Heart left ventricle (tissue), 16 donors: ENCODE measurements at regions of chr21 and their contacts with region 1.

Region 1: GRCh38 chr21:45778686-45779085 is 135.2 kb downstream of the PCBP3 start:
- DNase-seq: peak in 1 of 5 donors; percentile 59
- ATAC-seq: no peak
- H3K4me3 ChIP-seq: no peak overlapping the region
- H3K27ac ChIP-seq: no peak overlapping the region
- H3K4me1 ChIP-seq: no peaks in the 10 kb centered on the region
- H3K27me3 ChIP-seq: no peaks in the 10 kb centered on the region
- CTCF ChIP-seq: no peak
- POLR2A ChIP-seq: no peak

Region 2: DNA sequence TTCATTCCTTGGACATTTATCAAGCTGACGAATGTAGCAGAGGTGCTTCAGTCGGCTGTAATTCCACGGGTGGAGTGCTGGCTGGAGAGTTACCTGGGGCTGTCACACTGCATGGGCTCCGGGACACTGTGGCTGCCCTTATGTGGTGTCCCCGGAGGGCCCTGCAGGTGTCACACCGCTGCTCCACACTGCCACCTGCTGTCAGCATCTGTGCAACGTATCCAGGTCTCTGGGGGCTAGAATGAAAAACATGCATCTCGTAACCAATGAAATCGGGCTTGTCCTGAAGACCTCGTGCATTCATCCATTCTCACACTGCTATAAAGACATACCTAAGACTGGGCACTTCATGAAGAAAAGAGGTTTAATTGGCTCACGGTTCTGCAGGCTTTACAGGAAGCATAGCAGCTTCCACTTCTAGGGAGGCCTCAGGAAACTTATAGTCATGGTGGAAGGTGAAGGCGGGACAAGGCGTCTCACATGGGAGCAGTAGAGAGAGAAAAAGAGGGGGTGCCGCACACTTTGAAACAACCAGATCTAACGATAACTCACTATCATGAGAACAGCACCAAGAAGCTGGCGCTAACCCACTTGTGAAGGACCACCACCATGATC is 181.9 kb before region 1 on chr21:
- intact Hi-C with region 1: no loop called
- DNase-seq: peak; percentile 58 to 86 (median 66)
- ATAC-seq: peak in 3 of 4 donors; percentile 82 to 85 (median 85)
- H3K4me3 ChIP-seq: no peak overlapping the region
- H3K27ac ChIP-seq: no peak overlapping the region
- H3K4me1 ChIP-seq: peaks cover 0 to 3% (median 0%) of the 10 kb centered on the region in 12 donors
- H3K27me3 ChIP-seq: peaks cover 0 to 46% (median 5%) of the 10 kb centered on the region in 9 donors
- CTCF ChIP-seq: peak; percentile 63 to 88 (median 74)
- POLR2A ChIP-seq: no peak

Region 3: GRCh38 chr21:45725022-45725843 is 53.5 kb before region 1 on chr21:
- intact Hi-C with region 1: loop called in 1 of 10 experiments (anchors 5 kb)
- DNase-seq: no peak
- ATAC-seq: peak in 1 of 4 donors; percentile 15
- H3K4me3 ChIP-seq: no peak overlapping the region
- H3K27ac ChIP-seq: no peak overlapping the region
- H3K4me1 ChIP-seq: peaks cover 0 to 7% (median 0%) of the 10 kb centered on the region in 12 donors
- H3K27me3 ChIP-seq: no peaks in the 10 kb centered on the region
- CTCF ChIP-seq: no peak
- POLR2A ChIP-seq: no peak

Region 4: DNA sequence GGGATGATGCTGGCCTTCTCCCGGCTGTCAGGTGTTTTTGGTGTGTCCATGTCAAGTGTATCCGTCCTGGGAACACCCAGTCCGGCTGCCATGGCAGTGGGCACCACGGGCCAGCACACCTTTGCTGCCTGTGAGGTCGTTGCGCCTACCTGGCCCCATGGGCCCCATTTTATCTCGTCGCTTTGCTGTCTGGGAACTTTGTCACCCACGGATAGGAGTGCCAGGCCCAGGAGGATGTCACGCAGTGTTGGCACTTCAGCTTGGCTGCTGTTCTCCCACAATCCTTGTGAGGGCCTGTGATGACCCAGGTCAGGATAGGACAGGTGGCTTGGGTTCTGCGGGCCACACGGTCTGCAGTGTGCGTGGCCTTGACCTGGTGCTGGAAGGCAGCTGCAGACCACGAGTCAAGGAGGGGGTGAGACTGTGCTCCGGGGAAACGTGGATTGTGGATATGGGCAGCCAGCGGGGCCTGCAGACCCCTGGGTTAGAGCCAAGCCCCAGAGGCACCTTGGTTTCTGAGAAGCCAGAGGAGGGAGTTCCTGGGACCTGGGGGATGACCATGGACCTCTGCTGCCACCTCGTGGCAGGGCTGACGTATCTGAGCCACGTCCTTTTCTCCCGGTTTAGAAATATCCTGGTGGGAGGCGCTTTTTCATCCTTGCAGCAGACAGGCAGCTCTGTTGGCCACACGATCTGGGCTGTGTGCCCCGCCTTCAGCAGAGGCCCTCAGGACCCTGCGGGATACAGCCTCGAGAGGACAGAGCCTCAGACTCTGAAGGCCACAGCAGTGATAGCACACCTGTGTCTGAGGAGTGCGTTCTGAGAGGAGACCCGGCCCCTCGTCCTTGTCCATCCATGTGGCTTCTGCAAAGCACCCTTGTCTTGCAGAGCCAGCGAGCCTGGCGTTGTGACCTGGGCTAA is 41.7 kb after region 1 on chr21:
- intact Hi-C with region 1: no loop called
- DNase-seq: peak; percentile 67 to 85 (median 69)
- ATAC-seq: peak; percentile 77 to 90 (median 86)
- H3K4me3 ChIP-seq: no peak overlapping the region
- H3K27ac ChIP-seq: no peak overlapping the region
- H3K4me1 ChIP-seq: peaks cover 0 to 5% (median 0%) of the 10 kb centered on the region in 12 donors
- H3K27me3 ChIP-seq: no peaks in the 10 kb centered on the region
- CTCF ChIP-seq: peak; percentile 69 to 84 (median 78)
- POLR2A ChIP-seq: no peak

Region 5: DNA sequence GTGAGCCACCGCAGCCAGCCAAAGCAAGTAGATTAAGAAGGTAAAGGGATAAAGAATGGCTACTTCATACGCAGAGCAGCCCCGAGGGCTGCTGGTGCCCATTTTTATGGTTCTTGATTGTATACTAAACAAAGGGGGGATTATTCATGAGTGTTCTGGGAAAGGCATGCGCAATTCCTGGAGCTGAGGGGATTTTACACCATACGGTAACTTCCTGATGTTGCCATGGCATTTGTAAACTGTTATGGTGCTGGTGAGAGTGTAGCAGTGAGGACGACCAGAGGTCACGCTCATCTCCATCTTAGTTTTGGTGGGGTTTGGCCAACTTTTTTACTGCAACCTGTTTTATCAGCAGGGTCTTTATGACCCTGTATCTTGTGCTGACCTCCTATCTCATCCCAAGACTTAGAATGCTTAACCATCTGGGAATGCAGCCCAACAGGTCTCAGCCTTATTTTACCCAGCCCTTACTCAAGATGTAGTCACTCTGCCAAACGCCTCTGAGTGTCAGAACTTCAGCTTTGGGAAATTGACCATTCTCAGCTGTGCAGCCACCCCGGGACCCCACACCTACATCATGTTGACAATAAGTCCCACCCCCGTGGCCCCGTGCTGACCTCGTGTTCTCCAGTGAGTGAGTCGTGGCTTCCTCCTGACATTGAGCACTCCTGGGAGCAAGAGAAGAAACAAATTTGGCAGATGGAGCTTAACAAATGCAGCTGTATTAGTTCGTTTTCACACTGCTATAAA is 53.5 kb after region 1 on chr21:
- intact Hi-C with region 1: no loop called
- DNase-seq: no peak
- ATAC-seq: peak in 1 of 4 donors; percentile 24
- H3K4me3 ChIP-seq: no peak overlapping the region
- H3K27ac ChIP-seq: no peak overlapping the region
- H3K4me1 ChIP-seq: peaks cover 0 to 16% (median 5%) of the 10 kb centered on the region in 12 donors
- H3K27me3 ChIP-seq: no peaks in the 10 kb centered on the region
- CTCF ChIP-seq: no peak
- POLR2A ChIP-seq: no peak